IMR-90 (cell line): ENCODE measurements at regions of chr2 and their contacts with region 1.

Region 1: DNA sequence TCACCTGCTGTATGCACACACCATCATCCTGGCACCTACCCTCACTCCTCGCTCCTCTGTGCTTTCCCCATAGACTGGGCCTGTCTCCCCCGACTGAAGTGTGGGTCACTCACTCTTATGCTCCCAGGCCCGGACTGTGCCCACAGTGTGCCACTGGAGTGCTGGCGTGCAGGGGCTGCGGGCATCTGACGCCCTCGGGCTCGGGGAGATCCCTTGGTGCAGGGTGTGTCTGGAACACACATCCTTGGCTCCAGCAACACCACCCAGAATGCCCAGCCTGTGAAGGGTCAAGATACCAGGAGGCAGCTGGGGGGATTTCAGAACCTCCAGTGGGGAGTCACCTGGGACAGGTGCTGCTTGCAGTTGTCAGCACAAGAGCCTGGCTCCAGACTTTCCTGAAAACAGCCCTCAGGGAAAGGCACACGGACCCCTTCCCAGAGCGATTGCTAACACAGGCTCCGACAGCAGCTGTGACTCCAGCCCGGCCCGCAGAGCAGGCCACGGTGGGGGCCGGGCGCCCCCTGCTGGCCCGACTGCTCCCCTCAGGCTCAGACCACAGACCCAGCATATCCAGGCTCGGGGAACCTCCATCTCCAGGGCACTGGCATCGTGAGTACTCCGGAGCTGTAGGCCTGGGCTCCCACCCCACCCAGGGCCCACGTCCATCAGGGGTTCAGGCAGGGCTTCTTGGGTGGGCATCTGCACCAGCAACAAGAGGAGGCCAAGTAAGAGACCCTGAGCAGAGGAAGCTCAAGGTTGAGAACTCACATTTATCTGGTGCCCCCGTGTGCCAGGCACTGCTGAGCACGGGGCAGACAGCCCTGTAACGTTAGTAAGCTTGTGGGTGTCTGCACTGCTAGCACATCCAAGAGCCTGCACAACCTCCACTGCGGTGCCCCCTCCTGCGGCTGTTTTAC is 8.6 kb downstream of the HS1BP3 start:
- DNase-seq: peak; percentile 57
- ATAC-seq: peak; percentile 98
- H3K4me3 ChIP-seq: no peak overlapping the region
- H3K27ac ChIP-seq: no peak overlapping the region
- H3K4me1 ChIP-seq: no peaks in the 10 kb centered on the region
- H3K27me3 ChIP-seq: no peaks in the 10 kb centered on the region
- CTCF ChIP-seq: peak; percentile 96
- POLR2A ChIP-seq: peak; percentile 45; the same call in 1 of the 2 replicates
- RAD21 ChIP-seq: peak; percentile 95

Region 2: DNA sequence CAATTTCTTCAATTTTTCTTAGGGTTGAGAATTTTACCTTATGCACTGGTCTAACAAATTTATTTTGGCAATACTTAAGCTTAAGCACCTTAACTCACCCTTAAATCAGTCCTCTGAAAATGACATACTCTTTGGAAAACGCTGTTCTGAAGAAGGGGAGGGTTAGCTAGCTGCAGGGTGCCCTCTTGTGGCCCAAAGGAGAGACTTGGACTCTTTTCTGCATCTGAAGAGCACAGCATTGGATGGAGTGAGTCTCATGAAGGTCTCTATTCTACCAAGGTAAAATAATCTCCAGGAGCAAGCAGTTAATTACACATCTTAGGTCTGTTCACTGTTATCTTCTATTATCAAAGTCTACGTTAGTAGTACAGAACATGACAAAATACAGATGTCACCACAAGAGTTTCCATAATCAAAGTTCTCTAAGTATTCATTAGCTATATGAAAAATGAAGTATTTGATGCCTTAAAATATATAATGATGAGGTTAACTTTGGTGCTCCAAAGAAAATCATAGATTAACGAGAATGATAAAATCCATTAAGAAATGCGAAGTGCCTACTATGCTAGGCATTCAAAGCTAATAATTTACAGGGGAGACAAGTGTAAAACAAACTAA is 316.0 kb before region 1 on chr2:
- CTCF ChIA-PET with region 1: no interaction called
- POLR2A ChIA-PET with region 1: no interaction called
- dilution Hi-C with region 1: no loop called
- in situ Hi-C with region 1: no loop called
- intact Hi-C with region 1: loop called (anchors 2 kb)
- DNase-seq: peak; percentile 68
- ATAC-seq: peak; percentile 93
- H3K4me3 ChIP-seq: no peak overlapping the region
- H3K27ac ChIP-seq: no peak overlapping the region
- H3K4me1 ChIP-seq: peaks cover 2% of the 10 kb centered on the region; the same call in 1 of the 2 replicates
- H3K27me3 ChIP-seq: no peaks in the 10 kb centered on the region
- CTCF ChIP-seq: peak; percentile 75
- POLR2A ChIP-seq: no peak
- RAD21 ChIP-seq: peak; percentile 72

Region 3: GRCh38 chr2:20378792-20379519 is 263.4 kb before region 1 on chr2:
- CTCF ChIA-PET with region 1: interaction called, 6 read pairs
- POLR2A ChIA-PET with region 1: no interaction called
- dilution Hi-C with region 1: loop called (anchors 25 kb)
- in situ Hi-C with region 1: no loop called
- intact Hi-C with region 1: no loop called
- DNase-seq: peak; percentile 86
- ATAC-seq: peak; percentile 97
- H3K4me3 ChIP-seq: no peak overlapping the region
- H3K27ac ChIP-seq: peak overlapping the region; percentile 46; the same call in 1 of the 2 replicates
- H3K4me1 ChIP-seq: peaks cover 19% of the 10 kb centered on the region
- H3K27me3 ChIP-seq: no peaks in the 10 kb centered on the region
- CTCF ChIP-seq: peak; percentile 92
- POLR2A ChIP-seq: 0 out of 2 replicates have a peak, but pooled peaks have one; percentile 36
- RAD21 ChIP-seq: peak; percentile 88

Region 4: GRCh38 chr2:20398956-20399567 is 243.3 kb before region 1 on chr2:
- CTCF ChIA-PET with region 1: no interaction called
- POLR2A ChIA-PET with region 1: no interaction called
- dilution Hi-C with region 1: loop called (anchors 25 kb)
- in situ Hi-C with region 1: loop called (anchors 5 kb)
- intact Hi-C with region 1: loop called (anchors 1 kb)
- DNase-seq: peak; percentile 68
- ATAC-seq: peak; percentile 63
- H3K4me3 ChIP-seq: no peak overlapping the region
- H3K27ac ChIP-seq: no peak overlapping the region
- H3K4me1 ChIP-seq: peaks cover 4% of the 10 kb centered on the region
- H3K27me3 ChIP-seq: peaks cover 7% of the 10 kb centered on the region; the same call in 1 of the 2 replicates
- CTCF ChIP-seq: no peak
- POLR2A ChIP-seq: no peak
- RAD21 ChIP-seq: no peak